Head of caudate nucleus (tissue), 42 donors: ENCODE measurements at regions of chr16 and their contacts with region 1.

Region 1: GRCh38 chr16:52861614-52862022 is 191.1 kb downstream of the CHD9NB start:
- DNase-seq: peak in 16 of 42 donors; percentile 1 to 38 (median 16)

Region 2: DNA sequence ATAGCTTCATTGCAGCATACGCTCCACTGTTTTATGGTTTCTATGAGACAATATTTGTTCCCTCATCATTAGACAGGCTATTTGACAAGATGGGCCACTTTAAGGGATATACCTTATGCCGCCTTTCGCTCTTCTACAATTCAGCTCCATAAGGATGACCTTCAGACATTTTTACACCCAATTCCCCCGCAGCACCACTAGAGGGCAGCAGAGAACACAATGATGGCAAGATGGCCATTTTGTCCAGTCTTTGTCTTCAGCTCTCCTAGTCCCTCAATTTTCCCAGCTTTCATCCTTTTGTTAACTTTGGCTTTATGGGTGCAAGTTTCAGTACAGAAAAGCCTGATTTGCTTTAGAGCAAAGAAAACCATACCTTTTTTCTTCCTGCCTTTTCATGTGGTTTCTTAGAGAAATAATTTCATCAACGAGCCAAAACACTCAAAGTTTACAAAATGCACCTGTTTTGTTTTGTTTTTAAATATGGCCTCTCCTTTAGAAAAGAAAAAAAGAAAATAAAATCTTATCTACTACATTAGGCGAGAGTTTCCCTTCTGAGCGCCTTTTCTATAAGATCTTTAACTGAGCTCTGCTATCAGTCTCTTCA is 670.0 kb before region 1 on chr16:
- intact Hi-C with region 1: loop called (anchors 10 kb)
- DNase-seq: peak in 41 of 42 donors; percentile 41 to 90 (median 76)

Region 3: GRCh38 chr16:53154513-53154912 is 292.9 kb after region 1 on chr16:
- intact Hi-C with region 1: no loop called
- DNase-seq: no peak